AG04449 (cell line): ENCODE measurements at regions of chr3 and their contacts with region 1.

Region 1: DNA sequence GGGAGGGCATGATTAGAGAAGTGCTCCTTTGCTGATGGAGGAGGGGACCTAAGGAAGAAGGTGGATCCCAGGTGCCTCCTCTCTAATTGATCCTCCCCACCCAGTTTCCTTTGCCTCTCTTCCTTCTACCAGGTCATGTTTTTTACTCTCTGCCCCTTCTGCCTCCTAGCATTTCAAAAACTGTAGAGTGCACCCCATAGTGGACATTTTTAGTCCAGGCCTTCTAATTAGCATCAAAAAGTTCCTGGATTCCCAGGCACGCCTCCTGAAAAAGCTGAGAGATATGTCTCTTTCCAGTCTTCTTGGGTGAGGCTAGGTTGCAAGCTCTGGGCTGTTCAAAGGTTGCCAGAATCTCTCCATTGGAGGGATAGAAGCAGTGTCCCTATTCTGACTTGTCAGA is 18.7 kb upstream of the ITGB5 start:
- DNase-seq: no peak
- H3K4me3 ChIP-seq: no peak overlapping the region
- CTCF ChIP-seq: no peak

Region 2: GRCh38 chr3:124688581-124689454 is 217.0 kb before region 1 on chr3:
- CTCF ChIA-PET with region 1: interaction called, 16 read pairs
- POLR2A ChIA-PET with region 1: no interaction called
- DNase-seq: no peak
- H3K4me3 ChIP-seq: no peak overlapping the region
- CTCF ChIP-seq: peak; percentile 76

Region 3: GRCh38 chr3:124761250-124761796 is 144.5 kb before region 1 on chr3:
- CTCF ChIA-PET with region 1: interaction called, 467 read pairs
- POLR2A ChIA-PET with region 1: interaction called, 5 read pairs
- DNase-seq: peak; percentile 57
- H3K4me3 ChIP-seq: no peak overlapping the region
- CTCF ChIP-seq: peak; percentile 89

Region 4: GRCh38 chr3:124786441-124787241 is 119.2 kb before region 1 on chr3:
- CTCF ChIA-PET with region 1: interaction called, 188 read pairs
- POLR2A ChIA-PET with region 1: no interaction called
- DNase-seq: no peak
- H3K4me3 ChIP-seq: no peak overlapping the region
- CTCF ChIP-seq: no peak

Region 5: DNA sequence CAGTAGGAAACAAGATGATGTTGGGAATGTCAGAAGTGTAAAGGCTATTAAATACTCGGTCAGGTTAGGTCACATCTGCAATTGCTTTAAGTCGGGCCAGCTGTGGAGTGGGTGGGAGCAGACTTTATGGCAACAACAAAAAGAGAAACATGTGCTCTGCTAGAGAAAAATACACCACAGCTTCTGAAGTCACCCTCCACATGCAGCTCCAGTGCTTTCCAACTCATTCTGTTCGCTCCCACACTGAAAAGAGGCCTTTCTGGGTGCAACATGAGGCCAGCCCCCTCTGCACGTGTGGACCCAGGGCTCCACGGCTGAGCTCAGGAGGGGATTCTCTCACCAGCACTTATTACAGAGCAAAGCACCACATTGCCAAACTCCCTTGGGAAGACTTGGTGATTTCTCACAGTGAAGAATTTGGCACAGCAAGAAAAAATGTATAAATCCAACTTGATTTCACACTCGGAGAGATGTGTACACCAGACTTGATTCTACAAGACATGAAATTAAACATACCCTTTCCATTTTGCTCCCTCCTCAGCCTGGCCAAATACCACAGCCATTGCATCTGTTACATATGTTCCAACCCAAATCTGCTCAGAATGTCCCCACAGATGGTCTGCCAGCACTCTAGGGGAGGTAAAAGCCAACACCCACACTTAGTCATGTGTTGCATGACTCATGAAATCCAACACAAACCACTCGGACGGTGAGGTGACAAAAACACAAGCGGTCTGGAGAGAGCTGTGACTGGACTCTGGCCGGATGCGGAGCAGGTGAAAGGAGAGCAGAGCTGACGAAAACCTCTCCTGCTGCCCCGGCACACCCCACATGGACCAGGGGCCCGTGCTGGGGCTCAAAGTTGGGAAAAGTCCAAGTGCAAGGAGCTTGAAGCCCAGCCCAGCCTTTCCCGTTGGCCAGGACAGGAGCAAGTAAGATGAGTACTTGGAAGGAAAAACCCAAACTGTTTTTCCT is 93.3 kb before region 1 on chr3:
- CTCF ChIA-PET with region 1: interaction called, 30 read pairs
- POLR2A ChIA-PET with region 1: no interaction called
- DNase-seq: peak; percentile 94
- H3K4me3 ChIP-seq: peak overlapping the region; percentile 33
- CTCF ChIP-seq: no peak

Region 6: DNA sequence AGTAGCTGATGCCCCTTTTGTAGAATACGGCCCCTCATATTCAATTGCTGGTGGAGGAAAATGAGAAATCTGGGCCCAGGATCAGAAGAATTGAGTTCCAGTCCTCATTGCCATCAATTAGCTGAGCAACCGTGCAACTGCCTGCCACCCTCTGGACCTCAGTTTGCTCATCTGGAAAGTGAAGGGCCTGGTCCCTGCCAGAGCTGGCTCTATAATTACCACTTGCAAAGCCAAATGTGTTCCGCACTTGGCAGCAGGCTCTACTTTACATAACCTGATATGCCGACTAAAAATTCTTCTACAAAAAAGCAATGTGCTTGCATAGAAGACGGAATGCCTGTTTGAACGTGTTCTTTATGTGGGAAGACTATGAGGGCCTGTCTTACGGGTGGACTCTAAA is 10.1 kb before region 1 on chr3:
- CTCF ChIA-PET with region 1: interaction called, 59 read pairs
- POLR2A ChIA-PET with region 1: no interaction called
- DNase-seq: no peak
- H3K4me3 ChIP-seq: no peak overlapping the region
- CTCF ChIP-seq: no peak

Region 7: DNA sequence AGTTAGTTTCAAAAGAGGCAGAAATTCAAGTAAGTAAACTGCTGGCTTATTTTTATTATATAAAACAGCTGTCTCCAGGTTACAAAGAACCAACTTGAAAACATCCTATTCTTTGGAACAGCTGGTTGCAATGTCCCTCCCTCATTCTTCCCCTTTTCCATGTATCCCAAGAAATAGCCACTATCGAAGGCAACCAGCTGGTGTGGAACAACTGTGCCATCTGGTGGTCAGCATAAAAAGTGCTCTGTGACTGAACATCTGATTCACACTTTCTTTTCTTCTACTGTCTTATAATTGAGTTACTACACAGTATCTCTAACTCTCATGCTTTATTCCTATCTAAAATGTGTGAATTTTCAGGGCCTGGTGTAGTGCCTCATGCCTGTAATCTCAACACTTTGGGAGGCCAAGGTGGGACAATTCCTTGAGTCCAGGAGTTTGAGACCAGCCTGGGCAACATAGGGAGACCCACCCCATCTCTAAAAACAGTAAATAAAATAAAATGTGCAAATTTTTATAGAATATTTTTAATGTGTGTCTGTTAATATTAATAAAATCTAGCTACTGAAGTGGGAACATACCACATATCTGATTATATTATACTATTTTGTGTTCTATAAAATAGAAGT is 679.9 kb after region 1 on chr3:
- CTCF ChIA-PET with region 1: interaction called, 18 read pairs
- POLR2A ChIA-PET with region 1: no interaction called
- DNase-seq: no peak
- H3K4me3 ChIP-seq: no peak overlapping the region
- CTCF ChIP-seq: peak; percentile 81